Stomach (tissue), 19 donors: ENCODE measurements at regions of chr5 and their contacts with region 1.

Region 1: DNA sequence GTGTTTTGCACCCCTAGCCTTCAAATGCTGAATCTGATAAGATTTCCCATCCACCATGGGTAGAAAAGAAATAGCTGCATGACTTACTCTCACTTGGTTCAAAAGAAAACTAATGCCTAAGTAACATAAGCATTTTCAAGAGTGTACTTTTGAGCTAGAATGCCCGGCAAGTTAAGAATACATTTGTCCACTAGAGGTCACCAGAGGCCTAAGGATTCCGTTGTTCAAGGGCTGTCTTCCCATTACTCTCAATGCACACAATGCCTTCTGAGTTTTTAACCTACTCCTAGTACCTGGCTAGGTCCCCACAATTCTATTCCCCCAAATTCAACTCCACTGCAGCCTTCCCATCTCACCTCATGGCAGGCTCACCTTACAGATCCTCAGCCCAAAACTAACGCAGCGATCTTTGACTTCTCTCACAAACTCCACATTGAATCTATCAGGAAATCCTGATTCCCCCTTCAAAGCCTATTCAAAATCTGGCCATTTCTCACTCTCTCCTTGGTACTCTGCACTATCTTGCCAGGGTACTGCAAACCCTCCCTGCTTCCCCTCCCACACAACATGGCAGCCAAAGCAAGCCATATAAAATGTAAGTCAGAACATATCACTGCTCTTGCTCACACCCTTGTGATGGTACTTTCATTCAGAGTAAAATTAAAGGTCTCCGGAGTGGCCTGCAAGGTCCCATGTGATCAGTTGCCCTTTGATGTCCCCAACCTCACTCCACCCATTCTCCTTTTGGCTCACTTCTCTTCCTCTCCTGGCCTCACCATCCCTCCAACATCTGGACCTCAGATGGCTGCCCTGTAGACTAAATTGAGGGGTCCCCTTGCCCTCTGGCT is 13.4 kb downstream of the OXCT1 start:
- DNase-seq: peak in 1 of 2 donors; percentile 90
- H3K4me3 ChIP-seq: no peak overlapping the region
- H3K27ac ChIP-seq: no peak overlapping the region
- H3K4me1 ChIP-seq: peaks cover 0 to 6% (median 0%) of the 10 kb centered on the region in 4 donors
- H3K27me3 ChIP-seq: no peaks in the 10 kb centered on the region
- CTCF ChIP-seq: peak in 5 of 7 experiments; percentile 40 to 76 (median 69)
- EP300 ChIP-seq: no peak
- POLR2A ChIP-seq: no peak

Region 2: GRCh38 chr5:41809128-41809527 is 47.7 kb before region 1 on chr5:
- intact Hi-C with region 1: no loop called
- DNase-seq: no peak
- H3K4me3 ChIP-seq: no peak overlapping the region
- H3K27ac ChIP-seq: no peak overlapping the region
- H3K4me1 ChIP-seq: peaks cover 0 to 9% (median 0%) of the 10 kb centered on the region in 4 donors
- H3K27me3 ChIP-seq: no peaks in the 10 kb centered on the region
- CTCF ChIP-seq: no peak
- EP300 ChIP-seq: no peak
- POLR2A ChIP-seq: no peak

Region 3: DNA sequence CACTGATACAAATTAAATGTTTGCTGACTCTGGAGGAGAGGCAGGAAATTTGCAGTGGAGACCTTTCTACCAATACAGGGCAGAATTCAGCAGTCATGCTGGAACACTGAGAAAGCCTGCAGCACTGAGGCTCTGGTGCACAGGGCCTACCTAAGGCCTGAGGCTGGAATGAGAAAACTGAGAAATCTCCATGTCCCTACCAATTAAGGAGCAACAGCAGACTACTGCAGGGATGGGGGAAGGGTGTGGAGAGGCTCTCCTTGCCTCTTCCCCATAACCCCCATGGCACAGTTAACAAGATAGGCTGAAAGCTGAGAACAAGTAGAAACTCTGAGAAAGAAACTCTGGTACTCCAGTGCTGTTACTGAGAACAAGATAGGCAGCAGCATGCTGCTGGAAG is 78.7 kb after region 1 on chr5:
- intact Hi-C with region 1: loop called (anchors 10 kb)
- DNase-seq: no peak
- H3K4me3 ChIP-seq: no peak overlapping the region
- H3K27ac ChIP-seq: no peak overlapping the region
- H3K4me1 ChIP-seq: no peaks in the 10 kb centered on the region
- H3K27me3 ChIP-seq: no peaks in the 10 kb centered on the region
- CTCF ChIP-seq: no peak
- EP300 ChIP-seq: no peak
- POLR2A ChIP-seq: no peak

Region 4: GRCh38 chr5:42057254-42057690 is 200.4 kb after region 1 on chr5:
- intact Hi-C with region 1: loop called (anchors 5 kb)
- DNase-seq: peak; percentile 57 to 63
- H3K4me3 ChIP-seq: no peak overlapping the region
- H3K27ac ChIP-seq: no peak overlapping the region
- H3K4me1 ChIP-seq: no peaks in the 10 kb centered on the region
- H3K27me3 ChIP-seq: no peaks in the 10 kb centered on the region
- CTCF ChIP-seq: peak in 5 of 7 experiments; percentile 22 to 63 (median 55)
- EP300 ChIP-seq: no peak
- POLR2A ChIP-seq: no peak

Region 5: DNA sequence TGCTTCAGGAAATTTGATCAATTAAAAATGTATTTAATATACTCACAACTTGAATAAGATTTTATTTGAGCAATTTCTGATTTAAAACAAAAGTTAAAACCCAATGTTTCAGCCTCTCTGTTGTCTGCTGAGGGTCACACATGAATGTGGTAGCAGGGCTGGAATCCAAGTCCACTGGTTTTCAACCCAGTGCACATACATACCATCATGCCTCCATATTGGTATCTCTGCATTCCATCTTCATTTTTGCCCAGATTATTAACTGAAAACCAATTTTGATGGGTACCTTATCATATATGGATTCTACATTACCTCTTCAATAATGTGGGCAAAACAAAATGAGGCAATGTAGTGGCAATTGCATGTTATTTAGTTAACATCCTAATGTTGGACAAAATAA is 230.7 kb after region 1 on chr5:
- intact Hi-C with region 1: no loop called
- DNase-seq: no peak
- H3K4me3 ChIP-seq: no peak overlapping the region
- H3K27ac ChIP-seq: no peak overlapping the region
- H3K4me1 ChIP-seq: no peaks in the 10 kb centered on the region
- H3K27me3 ChIP-seq: no peaks in the 10 kb centered on the region
- CTCF ChIP-seq: no peak
- EP300 ChIP-seq: no peak
- POLR2A ChIP-seq: no peak

Region 6: DNA sequence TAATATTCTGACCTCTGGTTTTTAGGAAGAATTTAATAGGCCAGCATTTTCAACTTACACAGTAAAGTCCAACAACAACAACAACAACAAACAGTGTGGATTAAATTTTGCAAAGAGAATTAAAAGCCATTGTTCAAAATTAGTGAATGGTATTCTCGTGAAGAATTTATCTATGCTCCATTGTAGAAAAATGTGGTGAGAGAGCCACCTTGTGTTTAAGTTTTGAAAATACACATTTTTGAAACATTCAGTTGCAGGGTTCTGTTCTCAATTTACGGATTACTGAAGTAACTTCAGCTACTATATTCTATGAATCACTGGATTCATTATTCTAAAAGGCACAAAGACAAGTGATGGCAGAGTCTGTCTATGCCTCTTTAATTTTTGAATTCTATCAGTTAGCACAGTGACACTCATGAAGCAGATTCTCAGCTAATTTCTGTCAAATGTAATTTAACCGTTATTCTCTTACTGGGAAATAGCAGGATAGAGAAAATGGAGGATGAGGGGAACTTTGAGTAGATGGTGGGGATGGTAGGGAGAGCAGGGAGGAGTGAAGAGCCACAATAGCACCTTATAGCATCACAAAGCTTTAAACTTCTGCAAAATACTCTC is 910.7 kb after region 1 on chr5:
- intact Hi-C with region 1: loop called (anchors 10 kb)
- DNase-seq: peak in 1 of 2 donors; percentile 54
- H3K4me3 ChIP-seq: no peak overlapping the region
- H3K27ac ChIP-seq: no peak overlapping the region
- H3K4me1 ChIP-seq: no peaks in the 10 kb centered on the region
- H3K27me3 ChIP-seq: no peaks in the 10 kb centered on the region
- CTCF ChIP-seq: peak in 5 of 7 experiments; percentile 14 to 50 (median 24)
- EP300 ChIP-seq: no peak
- POLR2A ChIP-seq: no peak